GM10248 (cell line): ENCODE measurements at regions of chr9 and their contacts with region 1.

Region 1: DNA sequence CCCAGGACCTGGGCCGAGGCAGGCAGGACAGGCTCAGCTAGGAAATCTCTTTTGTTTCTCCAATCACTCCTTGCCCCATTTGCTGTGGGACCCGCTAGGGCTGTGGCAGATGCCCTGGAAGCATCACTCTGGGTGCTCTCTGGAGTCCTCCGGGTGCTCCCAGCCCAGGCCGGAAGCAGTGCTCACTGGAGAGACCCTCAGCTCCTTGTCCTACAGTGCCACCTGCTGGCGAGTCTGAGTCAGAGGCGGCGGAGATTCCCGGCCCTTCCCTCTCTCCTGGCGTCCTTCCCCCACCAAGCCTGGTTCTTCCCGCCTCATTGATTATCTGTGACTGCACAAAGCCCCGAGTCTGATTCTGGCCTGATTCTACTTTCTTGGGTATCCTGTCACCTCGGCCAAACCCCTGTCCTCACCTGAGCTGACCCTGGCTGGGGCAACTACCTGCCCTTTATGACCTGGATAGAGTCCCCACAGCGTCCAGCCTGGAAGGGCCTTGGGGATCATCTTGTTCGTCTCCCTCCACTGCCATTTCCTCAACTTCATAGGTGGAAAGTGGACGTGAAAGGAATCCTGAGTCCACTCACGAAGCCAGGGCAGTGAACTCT is 7.3 kb upstream of the BARHL1 start:
- DNase-seq: peak; percentile 77
- CTCF ChIP-seq: peak; percentile 70

Region 2: GRCh38 chr9:131366761-131367401 is 1208.2 kb before region 1 on chr9:
- CTCF ChIA-PET with region 1: no interaction called
- POLR2A ChIA-PET with region 1: interaction called, 10 read pairs
- DNase-seq: no peak
- CTCF ChIP-seq: peak; percentile 25

Region 3: GRCh38 chr9:132412089-132412488 is 163.0 kb before region 1 on chr9:
- CTCF ChIA-PET with region 1: interaction called, 17 read pairs
- POLR2A ChIA-PET with region 1: no interaction called
- DNase-seq: peak; percentile 32
- CTCF ChIP-seq: peak; percentile 40

Region 4: DNA sequence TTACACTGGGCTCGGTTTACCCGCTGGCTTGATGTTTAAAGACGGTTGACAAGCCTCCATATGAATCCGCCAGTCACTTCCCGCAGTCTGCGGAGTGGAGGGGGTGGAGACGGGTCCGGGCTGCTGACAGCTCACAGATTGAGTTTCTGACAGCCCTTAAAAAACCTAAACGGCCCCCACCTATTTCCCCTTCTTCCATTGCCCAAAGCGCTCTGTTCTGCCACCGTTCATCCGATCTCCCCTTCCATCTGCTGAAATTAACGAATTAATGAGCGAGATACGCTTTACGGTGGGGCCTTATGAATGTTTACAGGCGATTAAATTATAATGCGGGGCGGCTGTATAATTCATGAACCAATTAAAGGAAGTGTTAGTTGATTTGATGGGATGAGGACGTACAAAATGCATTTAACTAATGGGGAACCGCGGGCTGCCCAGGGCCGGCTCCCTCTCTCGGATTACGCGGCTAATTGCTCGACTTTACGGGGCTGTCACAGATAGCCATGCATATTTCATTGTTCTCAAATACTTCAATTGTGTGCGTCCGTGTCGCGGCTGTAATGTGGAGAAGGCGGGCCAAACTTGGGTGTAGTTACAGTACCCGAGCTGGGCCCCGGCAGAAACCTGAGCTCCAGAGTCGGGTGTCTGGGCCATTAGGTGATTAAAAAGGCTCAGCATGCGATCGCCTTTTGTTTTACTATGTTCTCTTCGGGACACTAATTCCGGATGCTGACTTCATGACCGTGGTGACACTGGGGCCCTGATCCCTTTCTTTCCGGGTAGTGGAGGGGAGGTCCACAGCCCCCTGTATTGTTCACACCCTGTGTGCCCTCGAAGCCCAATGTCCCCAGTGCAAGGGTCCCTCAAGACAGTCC is 170.0 kb after region 1 on chr9:
- CTCF ChIA-PET with region 1: no interaction called
- POLR2A ChIA-PET with region 1: no interaction called
- DNase-seq: no peak
- CTCF ChIP-seq: no peak